PC-3 (cell line): ENCODE measurements at regions of chrX and their contacts with region 1.

Region 1: DNA sequence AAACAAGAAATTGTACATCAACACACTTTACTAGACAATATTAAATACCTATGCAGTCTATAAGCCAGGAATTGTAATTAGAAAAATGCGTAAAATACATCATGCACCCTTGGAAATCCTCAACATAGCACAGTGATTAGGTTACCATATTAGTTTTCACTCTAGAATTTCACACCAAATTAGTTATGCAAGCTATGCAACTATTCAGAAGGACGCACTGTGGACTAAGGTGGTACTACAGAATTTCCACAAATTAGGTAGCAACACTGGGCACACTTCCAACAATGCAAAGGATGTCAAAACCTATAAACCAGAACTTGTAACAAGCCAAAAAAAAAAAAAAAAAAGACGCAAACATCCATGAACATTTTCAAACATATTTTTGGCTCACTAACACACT is 71.1 kb upstream of the ZCCHC13 start:
- DNase-seq: peak; percentile 76
- ATAC-seq: peak; percentile 18; the same call in 1 of the 2 replicates
- H3K4me3 ChIP-seq: no peak overlapping the region
- H3K27ac ChIP-seq: peak overlapping the region; percentile 45
- H3K4me1 ChIP-seq: peaks cover 25% of the 10 kb centered on the region
- H3K27me3 ChIP-seq: no peaks in the 10 kb centered on the region
- CTCF ChIP-seq: peak; percentile 37

Region 2: DNA sequence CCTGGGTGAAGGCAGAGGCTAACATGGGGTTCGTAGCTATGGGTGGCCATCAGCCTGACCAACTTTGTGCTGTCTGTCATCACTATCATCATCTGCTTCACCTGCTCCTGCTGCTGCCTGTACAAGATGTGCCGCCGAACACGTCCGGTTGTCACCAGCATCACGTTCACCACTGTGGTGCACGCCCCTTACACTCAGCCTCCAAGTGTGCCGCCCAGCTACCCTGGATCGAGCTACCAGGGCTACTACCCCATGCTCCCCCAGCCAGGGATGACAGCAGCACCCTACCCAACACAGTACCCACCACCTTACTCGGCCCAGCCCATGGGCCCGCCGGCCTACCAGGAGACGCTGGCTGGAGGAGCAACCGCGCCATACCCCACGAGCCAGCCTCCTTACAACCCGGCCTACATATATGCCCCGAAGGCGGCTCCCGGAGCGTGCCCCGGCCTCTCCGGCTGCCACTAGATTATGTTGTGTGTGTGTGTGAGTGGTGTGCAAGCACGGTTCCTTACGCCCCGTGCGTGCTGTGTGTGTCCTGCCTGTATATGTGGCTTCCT is 166.9 kb before region 1 on chrX:
- CTCF ChIA-PET with region 1: no interaction called
- POLR2A ChIA-PET with region 1: no interaction called
- intact Hi-C with region 1: no loop called
- DNase-seq: no peak
- ATAC-seq: no peak
- H3K4me3 ChIP-seq: no peak overlapping the region
- H3K27ac ChIP-seq: no peak overlapping the region
- H3K4me1 ChIP-seq: peaks cover 5% of the 10 kb centered on the region; the same call in 1 of the 2 replicates
- H3K27me3 ChIP-seq: no peaks in the 10 kb centered on the region
- CTCF ChIP-seq: no peak

Region 3: GRCh38 chrX:74291964-74292807 is 59.3 kb after region 1 on chrX:
- CTCF ChIA-PET with region 1: no interaction called
- POLR2A ChIA-PET with region 1: no interaction called
- intact Hi-C with region 1: loop called (anchors 2 kb)
- DNase-seq: peak; percentile 85
- ATAC-seq: peak; percentile 92
- H3K4me3 ChIP-seq: peak overlapping the region; percentile 98
- H3K27ac ChIP-seq: peak overlapping the region; percentile 98
- H3K4me1 ChIP-seq: no peaks in the 10 kb centered on the region
- H3K27me3 ChIP-seq: no peaks in the 10 kb centered on the region
- CTCF ChIP-seq: peak; percentile 42; the same call in 1 of the 2 replicates